ENCODE measurements at regions of chr11 and their contacts with region 1.

Region 1: DNA sequence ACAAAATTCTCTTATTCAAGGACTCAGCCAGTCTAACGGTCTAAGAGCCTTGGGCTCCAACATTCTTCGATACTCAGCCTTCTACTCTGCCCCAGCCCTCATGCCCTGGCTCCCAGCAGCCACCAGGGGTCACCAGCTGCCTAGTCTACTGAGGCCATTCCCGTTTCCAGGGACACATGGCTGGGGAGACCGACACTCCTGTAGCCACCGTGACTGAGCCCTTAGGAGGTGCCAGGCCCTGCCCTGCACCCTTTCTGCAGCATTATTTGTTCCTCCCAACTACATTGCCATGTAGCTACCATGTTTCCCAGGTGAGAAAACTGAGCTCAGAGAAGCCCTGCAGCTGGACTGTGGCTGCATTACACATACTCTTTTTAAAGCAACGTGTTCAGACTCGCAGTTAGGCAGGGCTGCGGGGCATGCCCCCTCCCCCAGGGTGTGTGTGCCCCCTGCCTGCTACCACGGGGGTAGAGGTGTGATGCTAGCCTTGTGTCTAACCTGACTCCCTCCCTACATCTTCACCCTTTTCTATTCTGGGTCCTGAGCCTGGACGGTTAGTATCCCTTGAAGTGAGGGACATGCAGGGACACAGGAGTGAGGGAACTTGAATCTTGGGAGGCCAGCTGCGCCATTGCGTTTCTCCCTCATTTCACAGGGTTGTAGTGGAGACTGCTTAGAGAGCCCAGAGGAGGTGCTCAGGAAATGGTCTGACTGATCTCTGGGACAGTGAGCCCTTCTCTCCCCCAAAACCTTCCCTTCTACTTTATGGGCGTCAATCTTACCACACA is 17.5 kb downstream of the ATG16L2 start:
- DNase-seq: peak; percentile 87
- H3K4me3 ChIP-seq: no peak overlapping the region
- H3K27ac ChIP-seq: peak overlapping the region; percentile 95
- H3K4me1 ChIP-seq: peaks cover 72% of the 10 kb centered on the region
- H3K27me3 ChIP-seq: no peaks in the 10 kb centered on the region
- CTCF ChIP-seq: peak; percentile 97

Region 2: DNA sequence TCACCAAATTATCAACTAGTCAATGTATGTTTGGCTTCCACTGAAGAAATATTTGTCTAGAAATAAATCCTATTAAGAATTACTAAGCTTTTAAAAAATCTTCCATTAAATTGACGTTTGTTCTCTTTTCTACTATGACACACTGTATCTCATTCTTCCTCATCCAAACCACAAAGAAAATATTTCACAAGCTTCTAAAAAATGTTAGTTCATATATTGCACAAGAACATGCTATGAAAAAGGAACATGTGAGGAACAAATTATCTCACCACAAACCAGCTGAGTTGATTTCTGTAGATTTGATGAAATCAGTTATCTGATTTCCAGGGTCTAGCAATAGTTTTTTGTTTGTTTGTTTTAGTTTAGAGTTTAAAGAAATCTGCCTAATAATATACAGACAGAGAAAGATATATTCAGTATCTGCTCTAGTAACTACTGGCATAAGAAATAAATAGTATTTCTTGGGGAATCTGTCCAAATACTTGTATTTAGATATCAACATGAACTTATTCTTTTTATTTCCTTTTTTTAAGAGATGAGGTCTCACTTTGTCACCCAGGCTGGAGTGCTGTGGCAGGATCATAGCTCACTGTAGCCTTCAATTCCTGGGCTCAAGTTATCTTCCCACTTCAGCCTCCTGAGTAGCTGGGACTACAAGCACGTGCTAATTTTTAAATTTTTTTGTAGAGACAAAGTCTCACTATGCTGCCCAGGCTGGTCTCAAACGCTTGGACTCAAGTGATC is 144.2 kb after region 1 on chr11:
- intact Hi-C with region 1: no loop called
- DNase-seq: no peak
- H3K4me3 ChIP-seq: no peak overlapping the region
- H3K27ac ChIP-seq: peak overlapping the region; percentile 70
- H3K4me1 ChIP-seq: peaks cover 29% of the 10 kb centered on the region
- H3K27me3 ChIP-seq: no peaks in the 10 kb centered on the region
- CTCF ChIP-seq: no peak

Region 3: DNA sequence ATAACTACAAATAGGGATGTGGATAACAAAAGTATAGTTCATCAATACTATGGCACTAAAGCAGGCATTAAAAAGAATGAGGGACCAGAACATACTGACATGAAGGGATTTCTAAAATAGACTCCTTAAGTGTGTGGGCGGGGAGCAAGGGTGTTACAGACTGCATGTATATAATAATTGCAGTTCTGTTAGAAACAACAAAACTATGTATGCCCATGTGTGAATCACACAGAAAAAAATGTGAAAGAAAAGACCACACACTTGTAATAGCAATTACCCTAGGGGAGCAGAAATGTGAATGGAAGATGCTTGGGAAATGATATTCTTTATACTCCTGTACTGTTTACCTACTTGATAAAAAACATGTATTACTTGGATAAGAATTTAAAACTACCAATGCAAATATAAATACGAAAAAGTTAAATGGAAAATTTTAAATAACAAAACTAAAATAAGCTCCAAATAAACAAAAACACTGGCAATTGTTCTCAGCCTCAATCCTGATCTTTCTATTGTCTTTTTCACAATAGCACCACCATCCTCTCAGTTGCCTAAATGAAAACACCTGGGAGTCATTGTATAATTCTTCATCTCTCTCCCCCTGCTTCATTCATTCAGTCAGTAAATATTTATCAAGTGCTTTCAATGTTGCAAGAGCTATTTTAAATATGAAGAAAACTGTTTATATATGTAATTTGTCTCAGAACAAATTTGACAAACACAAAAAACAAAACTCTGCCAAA is 180.6 kb after region 1 on chr11:
- intact Hi-C with region 1: no loop called
- DNase-seq: no peak
- H3K4me3 ChIP-seq: no peak overlapping the region
- H3K27ac ChIP-seq: no peak overlapping the region
- H3K4me1 ChIP-seq: peaks cover 25% of the 10 kb centered on the region
- H3K27me3 ChIP-seq: no peaks in the 10 kb centered on the region
- CTCF ChIP-seq: no peak

Region 4: DNA sequence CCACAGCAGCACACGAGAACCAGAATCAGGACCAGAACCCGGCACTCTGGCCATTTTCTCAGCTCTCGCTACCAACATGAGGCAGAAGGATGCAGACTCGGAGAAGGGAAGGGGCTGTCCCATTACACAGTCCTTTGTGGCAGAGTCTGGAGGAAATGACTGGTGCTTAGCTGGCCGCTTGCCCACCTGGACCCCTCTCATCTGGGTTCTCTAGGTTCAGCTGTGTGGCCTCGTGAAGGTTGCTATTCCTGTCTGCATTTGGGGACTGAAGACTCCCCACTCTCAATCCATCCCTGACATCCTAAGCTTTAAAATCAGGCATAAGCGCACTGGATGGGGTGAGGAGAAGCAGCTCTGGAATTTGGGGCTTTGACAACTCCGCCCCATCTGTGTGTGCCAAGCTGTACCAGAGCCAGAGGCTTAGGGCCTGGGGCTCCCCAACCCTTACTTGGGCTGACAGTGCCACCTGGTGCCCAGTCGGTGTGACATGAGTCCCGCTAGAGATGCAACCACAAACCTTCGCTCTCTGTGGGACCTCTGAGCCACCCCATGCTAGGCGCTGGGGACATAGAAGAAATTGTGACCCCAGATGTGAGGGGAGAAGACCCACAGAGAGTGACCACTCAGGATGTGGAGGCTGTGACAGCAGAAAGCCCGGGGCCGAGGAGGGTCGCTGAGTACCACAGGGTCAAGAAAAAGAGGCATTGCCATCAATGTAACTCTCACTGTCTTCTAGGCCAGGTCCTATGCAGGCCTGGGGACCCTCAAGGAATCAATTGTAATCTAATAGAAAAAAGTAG is 346.3 kb after region 1 on chr11:
- intact Hi-C with region 1: loop called (anchors 5 kb)
- DNase-seq: peak; percentile 84
- H3K4me3 ChIP-seq: peak overlapping the region; percentile 11
- H3K27ac ChIP-seq: peak overlapping the region; percentile 86
- H3K4me1 ChIP-seq: peaks cover 71% of the 10 kb centered on the region
- H3K27me3 ChIP-seq: no peaks in the 10 kb centered on the region
- CTCF ChIP-seq: peak; percentile 85

Measured in left ventricle myocardium inferior (tissue), 1 donor.